Activated CD4-positive, alpha-beta memory T cell treated with anti-CD3 and anti-CD28 coated beads, Interleukin-2, amount 10 ng/mL, durations not matched to agents 7 days and 5 days (primary cell): ENCODE measurements at regions of chr20 and their contacts with region 1.

Region 1: GRCh38 chr20:45293041-45294002 is 13.3 kb upstream of the RBPJL start:
- DNase-seq: peak; percentile 84
- H3K4me3 Mint-ChIP-seq: peak overlapping the region; percentile 64
- H3K27ac Mint-ChIP-seq: no peak overlapping the region
- H3K4me1 Mint-ChIP-seq: peaks cover 10% of the 10 kb centered on the region
- H3K27me3 Mint-ChIP-seq: peaks cover 39% of the 10 kb centered on the region

Region 2: DNA sequence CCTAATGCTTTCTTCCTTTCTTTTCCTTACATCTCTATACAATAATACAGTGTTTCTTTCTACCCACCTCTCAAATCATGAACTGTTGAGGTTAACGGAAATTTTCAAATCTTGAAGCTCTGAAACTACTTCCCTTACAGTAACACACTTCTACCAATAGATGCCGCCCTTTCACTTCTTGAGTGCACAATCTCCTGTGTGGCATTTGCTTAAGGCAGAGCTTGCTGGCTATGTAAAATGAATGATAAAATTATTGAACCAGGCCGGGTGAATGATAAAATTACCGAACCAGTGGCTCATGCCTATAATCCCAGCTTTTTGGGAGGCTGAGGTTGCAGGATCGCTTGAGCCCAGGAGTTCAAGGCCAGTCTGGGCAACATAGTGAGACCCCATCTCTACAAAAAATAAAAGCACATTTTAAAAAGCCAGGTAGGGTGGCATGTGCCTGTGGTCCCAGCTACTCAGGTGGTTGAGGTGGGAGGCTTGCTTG is 249.2 kb before region 1 on chr20:
- CTCF ChIA-PET with region 1: interaction called, 14 read pairs
- POLR2A ChIA-PET with region 1: no interaction called
- DNase-seq: peak; percentile 43
- H3K4me3 Mint-ChIP-seq: no peak overlapping the region
- H3K27ac Mint-ChIP-seq: peak overlapping the region; percentile 55
- H3K4me1 Mint-ChIP-seq: peaks cover 54% of the 10 kb centered on the region
- H3K27me3 Mint-ChIP-seq: no peaks in the 10 kb centered on the region

Region 3: GRCh38 chr20:45138561-45139300 is 154.6 kb before region 1 on chr20:
- CTCF ChIA-PET with region 1: interaction called, 17 read pairs
- POLR2A ChIA-PET with region 1: no interaction called
- DNase-seq: peak; percentile 76
- H3K4me3 Mint-ChIP-seq: no peak overlapping the region
- H3K27ac Mint-ChIP-seq: no peak overlapping the region
- H3K4me1 Mint-ChIP-seq: no peaks in the 10 kb centered on the region
- H3K27me3 Mint-ChIP-seq: peaks cover 8% of the 10 kb centered on the region

Region 4: DNA sequence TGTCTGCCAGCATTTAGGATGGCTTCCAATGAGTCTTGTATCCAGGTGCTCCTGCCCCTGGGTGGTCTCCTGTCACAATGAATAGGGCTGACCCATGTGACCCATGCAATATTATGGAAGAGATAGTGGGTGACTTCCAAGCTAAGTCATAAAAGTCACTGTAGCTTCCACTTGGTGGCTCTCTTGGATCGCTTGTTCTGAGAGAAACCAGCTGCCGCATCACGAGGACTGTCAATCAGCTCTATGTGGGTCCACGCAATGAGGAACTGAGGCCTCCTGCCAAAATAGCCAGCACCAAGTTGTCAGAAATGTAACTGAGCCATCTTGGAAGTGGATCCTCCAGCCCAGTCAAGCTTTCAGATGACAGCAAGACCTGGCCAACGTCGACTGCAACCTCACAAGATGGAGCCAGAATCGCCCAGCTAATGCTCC is 29.6 kb after region 1 on chr20:
- CTCF ChIA-PET with region 1: interaction called, 20 read pairs
- POLR2A ChIA-PET with region 1: no interaction called
- DNase-seq: no peak
- H3K4me3 Mint-ChIP-seq: no peak overlapping the region
- H3K27ac Mint-ChIP-seq: no peak overlapping the region
- H3K4me1 Mint-ChIP-seq: peaks cover 30% of the 10 kb centered on the region
- H3K27me3 Mint-ChIP-seq: no peaks in the 10 kb centered on the region

Region 5: DNA sequence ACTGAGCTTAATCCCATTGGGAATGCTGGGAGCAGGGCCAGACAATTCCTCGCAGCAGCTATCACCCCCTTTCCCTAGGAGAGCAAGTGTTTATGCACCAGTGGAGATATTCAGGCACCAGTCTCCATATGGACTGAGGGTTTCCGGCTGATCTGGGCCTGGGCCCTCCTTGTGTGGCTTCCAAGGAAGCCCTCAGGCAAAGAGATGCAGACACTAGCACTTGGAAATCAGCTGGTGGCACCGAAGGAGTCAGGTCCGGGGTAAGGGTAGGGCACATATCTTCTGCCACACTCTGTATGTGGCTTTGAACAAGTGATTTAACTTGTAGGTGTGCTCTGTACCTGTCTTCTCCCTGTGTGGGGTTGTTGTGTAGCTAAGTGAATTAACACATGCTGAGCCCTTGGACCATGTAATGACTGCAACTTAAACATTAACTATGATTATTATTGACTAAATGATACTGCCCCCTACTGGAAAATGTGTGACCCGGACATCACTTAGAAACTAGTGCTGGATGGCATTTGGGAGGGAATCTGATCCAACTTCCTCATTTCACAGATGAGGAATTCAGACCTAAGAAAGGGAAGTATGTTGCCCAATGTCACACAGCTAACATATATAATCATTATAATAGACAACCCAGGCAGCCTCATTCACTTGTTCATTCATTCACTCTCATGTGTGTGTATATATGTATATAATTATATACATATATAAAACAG is 156.9 kb after region 1 on chr20:
- CTCF ChIA-PET with region 1: interaction called, 11 read pairs
- POLR2A ChIA-PET with region 1: no interaction called
- DNase-seq: no peak
- H3K4me3 Mint-ChIP-seq: no peak overlapping the region
- H3K27ac Mint-ChIP-seq: no peak overlapping the region
- H3K4me1 Mint-ChIP-seq: peaks cover 10% of the 10 kb centered on the region
- H3K27me3 Mint-ChIP-seq: peaks cover 4% of the 10 kb centered on the region